Activated CD4-positive, alpha-beta T cell treated with anti-CD3 and anti-CD28 coated beads for 36 hours (primary cell): ENCODE measurements at regions of chr3 and their contacts with region 1.

Region 1: DNA sequence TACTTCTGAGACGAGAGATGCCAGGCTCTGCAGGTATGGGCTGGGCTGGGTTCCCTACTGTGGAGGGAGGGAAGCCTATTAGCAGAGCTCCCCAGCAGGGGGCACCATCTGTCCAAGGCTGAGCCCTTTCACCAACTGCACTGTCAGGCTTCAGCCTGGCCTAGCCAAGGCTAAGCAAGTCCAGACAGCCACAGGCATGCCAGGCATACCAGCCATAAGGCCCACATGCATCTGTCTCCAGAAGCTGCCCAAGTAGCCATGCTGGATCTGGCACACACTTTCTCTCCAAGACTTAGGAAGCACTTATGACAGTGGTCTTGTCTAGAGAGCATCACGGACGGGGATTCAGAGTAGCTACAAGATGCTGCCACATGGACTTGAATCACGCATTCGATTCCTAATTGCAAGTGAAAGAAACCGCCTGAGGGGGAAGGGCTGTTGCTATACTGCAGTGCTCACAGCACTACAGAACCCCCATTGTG is 28.3 kb downstream of the RUVBL1 start:
- DNase-seq: peak; percentile 88
- ATAC-seq: peak; percentile 98
- H3K4me3 Mint-ChIP-seq: no peak overlapping the region
- H3K27ac Mint-ChIP-seq: no peak overlapping the region
- H3K4me1 Mint-ChIP-seq: peaks cover 4% of the 10 kb centered on the region
- H3K27me3 Mint-ChIP-seq: no peaks in the 10 kb centered on the region

Region 2: DNA sequence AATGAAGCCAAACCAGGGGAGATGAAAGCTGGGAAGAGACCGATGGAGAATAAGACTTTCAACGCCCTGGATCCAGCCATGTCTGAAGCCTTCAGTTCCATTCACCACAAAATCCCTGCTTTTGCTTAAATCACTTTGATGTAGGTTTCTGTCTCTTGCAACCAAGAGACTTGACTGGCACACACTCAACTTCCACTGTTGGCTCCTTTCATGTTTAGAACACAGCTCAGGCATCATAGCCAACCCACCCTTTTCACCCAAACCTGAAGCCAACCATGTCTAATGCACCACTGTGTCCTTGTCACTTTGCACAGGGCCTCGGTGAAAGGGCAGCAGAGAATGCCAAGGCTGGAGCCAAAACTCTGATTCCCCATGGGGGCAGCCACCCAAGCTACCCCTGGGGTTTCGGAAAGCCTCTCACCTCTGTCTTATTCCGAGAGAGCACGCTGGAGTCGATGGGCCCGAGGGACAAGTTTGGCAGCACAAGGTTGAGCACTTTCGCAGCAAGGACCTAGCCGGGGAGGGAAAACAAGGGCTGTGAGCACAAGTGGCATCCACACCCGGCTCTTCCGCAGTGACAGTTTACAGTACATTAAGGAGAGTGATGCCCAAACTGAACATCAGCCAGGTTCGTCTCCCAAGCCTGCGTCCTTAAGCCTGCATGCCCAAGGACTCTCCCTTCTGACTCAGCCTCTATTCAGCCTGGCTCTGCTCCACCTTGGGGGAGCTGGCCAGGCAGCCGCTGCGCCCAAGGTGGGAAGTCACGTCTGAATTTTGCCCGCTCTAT is 384.9 kb before region 1 on chr3:
- CTCF ChIA-PET with region 1: no interaction called
- POLR2A ChIA-PET with region 1: no interaction called
- intact Hi-C with region 1: no loop called
- DNase-seq: no peak
- ATAC-seq: no peak
- H3K4me3 Mint-ChIP-seq: no peak overlapping the region
- H3K27ac Mint-ChIP-seq: no peak overlapping the region
- H3K4me1 Mint-ChIP-seq: no peaks in the 10 kb centered on the region
- H3K27me3 Mint-ChIP-seq: no peaks in the 10 kb centered on the region

Region 3: DNA sequence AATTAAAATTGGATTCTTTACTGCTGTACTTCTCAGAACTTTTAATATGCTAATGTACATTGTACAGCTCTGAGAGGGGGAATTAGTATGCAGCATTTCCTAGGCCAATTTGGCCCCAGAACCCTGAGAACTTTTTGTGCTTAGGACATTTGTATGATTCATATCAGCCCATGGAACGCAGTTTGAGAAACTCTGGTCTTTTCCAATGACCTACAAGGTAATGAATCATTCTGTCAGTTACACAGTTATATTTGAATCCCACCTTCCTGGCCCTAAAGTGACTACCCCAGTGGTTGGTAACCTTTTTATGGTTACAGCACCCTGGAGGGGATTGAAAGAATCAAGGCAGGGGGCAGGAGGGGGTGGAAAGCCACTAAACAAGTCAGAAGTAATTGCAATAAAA is 205.8 kb before region 1 on chr3:
- CTCF ChIA-PET with region 1: no interaction called
- POLR2A ChIA-PET with region 1: no interaction called
- intact Hi-C with region 1: no loop called
- DNase-seq: no peak
- ATAC-seq: no peak
- H3K4me3 Mint-ChIP-seq: no peak overlapping the region
- H3K27ac Mint-ChIP-seq: no peak overlapping the region
- H3K4me1 Mint-ChIP-seq: peaks cover 8% of the 10 kb centered on the region
- H3K27me3 Mint-ChIP-seq: peaks cover 7% of the 10 kb centered on the region

Region 4: GRCh38 chr3:128123538-128124368 is 28.5 kb after region 1 on chr3 and contains the start of gene RUVBL1:
- CTCF ChIA-PET with region 1: interaction called, 10 read pairs
- POLR2A ChIA-PET with region 1: no interaction called
- intact Hi-C with region 1: no loop called
- DNase-seq: peak; percentile 99
- ATAC-seq: peak; percentile 99
- H3K4me3 Mint-ChIP-seq: peak within 1 kb of the TSS; percentile 99
- H3K27ac Mint-ChIP-seq: peak within 1 kb of the TSS; percentile 96
- H3K4me1 Mint-ChIP-seq: peaks cover 30% of the 10 kb centered on the region
- H3K27me3 Mint-ChIP-seq: no peaks in the 10 kb centered on the region
- total RNA-seq, gene RUVBL1: 97.0 to 99.9 TPM

Region 5: DNA sequence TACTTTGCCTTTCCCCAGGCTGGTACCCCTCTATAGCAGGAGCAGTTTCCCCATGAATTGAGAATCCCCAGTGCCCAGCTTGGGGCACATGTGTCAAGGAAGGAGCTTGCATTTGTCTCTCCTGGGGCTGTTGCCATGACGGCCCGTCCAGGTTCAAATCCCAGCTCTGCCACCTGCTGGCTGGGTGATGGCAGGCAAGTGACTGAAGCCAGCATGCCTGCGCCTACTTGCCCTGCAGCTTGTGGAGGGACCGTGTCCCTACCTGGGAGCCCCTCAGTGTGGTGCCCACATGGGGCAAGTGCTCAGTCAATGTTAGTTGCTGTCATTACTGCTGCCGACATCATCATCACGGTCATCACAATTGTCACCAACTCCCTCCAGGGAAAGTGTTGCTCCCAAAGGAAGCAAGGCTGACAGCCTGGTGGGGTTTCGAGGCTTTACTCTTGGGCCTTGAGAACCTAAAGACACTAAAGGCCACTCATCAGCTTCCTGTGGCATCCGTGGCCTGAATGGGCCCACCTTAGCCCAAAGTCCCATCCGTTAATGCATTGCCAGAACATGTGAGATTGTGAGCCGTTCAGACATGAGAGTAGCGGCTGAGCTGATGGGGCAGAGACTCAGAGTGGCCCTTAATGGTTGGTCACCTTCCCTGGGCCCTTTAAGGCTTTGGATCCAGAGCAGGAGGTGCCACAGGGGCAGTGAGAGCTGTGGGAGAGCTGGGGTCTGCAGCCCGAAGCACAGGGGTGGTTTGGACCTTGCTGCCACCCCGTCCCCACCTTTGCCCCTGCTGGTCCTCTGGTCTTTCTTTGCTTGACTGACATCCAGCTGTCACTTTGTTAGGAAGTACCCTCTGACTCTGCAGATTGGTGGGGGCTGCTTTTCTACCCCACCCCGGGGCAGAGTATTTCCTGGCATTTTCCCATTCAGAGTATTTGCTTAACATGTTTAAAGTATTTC is 227.1 kb after region 1 on chr3:
- CTCF ChIA-PET with region 1: interaction called, 12 read pairs
- POLR2A ChIA-PET with region 1: no interaction called
- intact Hi-C with region 1: loop called in 1 of 2 experiments (anchors 1 kb)
- DNase-seq: peak; percentile 76
- ATAC-seq: peak; percentile 75
- H3K4me3 Mint-ChIP-seq: no peak overlapping the region
- H3K27ac Mint-ChIP-seq: no peak overlapping the region
- H3K4me1 Mint-ChIP-seq: peaks cover 51% of the 10 kb centered on the region
- H3K27me3 Mint-ChIP-seq: no peaks in the 10 kb centered on the region

Region 6: DNA sequence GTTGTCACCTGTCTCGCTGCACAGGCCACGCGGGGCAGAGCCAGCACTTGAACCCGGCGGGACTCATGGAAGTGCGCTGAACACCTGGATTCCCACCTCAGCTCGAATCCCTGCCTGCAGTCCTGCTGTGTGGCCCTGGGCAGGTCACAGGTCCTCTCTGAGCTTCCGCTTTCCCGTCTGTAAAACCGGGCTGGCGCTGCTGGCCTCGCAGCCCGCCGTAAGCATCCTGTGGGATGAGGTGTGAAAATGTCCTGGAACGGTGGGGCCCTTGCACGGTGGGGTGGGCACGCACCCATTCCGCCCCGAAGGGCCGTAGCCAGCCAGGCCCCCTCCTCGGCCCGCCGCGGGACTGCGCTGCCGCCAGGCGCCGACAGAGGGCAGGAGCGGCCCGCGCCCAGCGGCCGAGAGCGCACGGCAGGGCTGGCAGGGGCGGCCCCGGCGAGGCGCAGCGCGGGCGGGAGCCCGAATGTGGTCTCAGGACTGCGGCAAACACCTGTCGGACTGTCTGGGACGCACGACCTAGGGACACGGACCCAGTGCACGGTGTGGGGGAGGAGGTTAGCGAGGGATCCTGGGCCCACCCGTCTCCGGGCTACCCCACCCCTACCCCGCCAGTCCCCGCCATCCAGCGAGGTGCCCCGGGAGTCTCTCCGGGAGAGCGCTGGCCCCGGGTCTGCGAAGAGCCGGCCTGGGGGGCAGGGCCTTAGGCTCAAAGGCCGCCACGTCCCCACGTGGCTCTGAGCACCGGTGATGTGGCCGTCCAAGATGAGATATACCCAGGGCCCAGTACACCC is 331.1 kb after region 1 on chr3:
- CTCF ChIA-PET with region 1: interaction called, 5 read pairs
- POLR2A ChIA-PET with region 1: no interaction called
- intact Hi-C with region 1: loop called in 1 of 2 experiments (anchors 5 kb)
- DNase-seq: peak; percentile 75
- ATAC-seq: peak; percentile 91
- H3K4me3 Mint-ChIP-seq: no peak overlapping the region
- H3K27ac Mint-ChIP-seq: no peak overlapping the region
- H3K4me1 Mint-ChIP-seq: no peaks in the 10 kb centered on the region
- H3K27me3 Mint-ChIP-seq: peaks cover 18% of the 10 kb centered on the region

Region 7: DNA sequence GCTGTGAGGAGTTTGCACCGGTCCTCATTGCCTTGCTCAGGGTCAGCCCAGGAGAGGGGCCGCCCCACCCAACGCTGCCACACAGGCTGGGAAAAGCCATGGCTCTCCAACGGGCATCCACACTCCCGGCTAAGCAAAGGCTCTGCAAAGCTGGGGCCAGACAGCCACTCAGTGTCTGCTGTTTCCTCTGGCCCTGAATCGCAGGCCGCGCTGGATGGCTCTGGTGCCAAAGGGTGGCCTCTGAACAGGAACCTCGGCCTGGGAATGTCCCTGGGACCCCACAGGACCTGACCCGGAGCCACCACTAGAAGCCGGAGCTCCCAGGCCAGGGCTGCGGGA is 512.4 kb after region 1 on chr3:
- CTCF ChIA-PET with region 1: no interaction called
- POLR2A ChIA-PET with region 1: no interaction called
- intact Hi-C with region 1: loop called in 1 of 2 experiments (anchors 1 kb)
- DNase-seq: no peak
- ATAC-seq: no peak
- H3K4me3 Mint-ChIP-seq: no peak overlapping the region
- H3K27ac Mint-ChIP-seq: no peak overlapping the region
- H3K4me1 Mint-ChIP-seq: no peaks in the 10 kb centered on the region
- H3K27me3 Mint-ChIP-seq: no peaks in the 10 kb centered on the region